ENCODE measurements at regions of chr19 and their contacts with region 1.

Region 1: GRCh38 chr19:10870955-10871603 is at the start of gene CARM1:
- DNase-seq: peak; percentile 97 to 100 (median 98)
- H3K4me3 ChIP-seq: peak within 1 kb of the TSS; percentile 52 to 90 (median 74)
- H3K27ac ChIP-seq: peak within 1 kb of the TSS in 57 of 59 donors; percentile 31 to 95 (median 86)
- H3K27me3 ChIP-seq: no peaks in the 10 kb centered on the region
- CTCF ChIP-seq: peak in 55 of 56 donors; percentile 17 to 80 (median 63)
- total RNA-seq, gene CARM1: 31.2 to 58.4 (median 45.9) TPM

Region 2: DNA sequence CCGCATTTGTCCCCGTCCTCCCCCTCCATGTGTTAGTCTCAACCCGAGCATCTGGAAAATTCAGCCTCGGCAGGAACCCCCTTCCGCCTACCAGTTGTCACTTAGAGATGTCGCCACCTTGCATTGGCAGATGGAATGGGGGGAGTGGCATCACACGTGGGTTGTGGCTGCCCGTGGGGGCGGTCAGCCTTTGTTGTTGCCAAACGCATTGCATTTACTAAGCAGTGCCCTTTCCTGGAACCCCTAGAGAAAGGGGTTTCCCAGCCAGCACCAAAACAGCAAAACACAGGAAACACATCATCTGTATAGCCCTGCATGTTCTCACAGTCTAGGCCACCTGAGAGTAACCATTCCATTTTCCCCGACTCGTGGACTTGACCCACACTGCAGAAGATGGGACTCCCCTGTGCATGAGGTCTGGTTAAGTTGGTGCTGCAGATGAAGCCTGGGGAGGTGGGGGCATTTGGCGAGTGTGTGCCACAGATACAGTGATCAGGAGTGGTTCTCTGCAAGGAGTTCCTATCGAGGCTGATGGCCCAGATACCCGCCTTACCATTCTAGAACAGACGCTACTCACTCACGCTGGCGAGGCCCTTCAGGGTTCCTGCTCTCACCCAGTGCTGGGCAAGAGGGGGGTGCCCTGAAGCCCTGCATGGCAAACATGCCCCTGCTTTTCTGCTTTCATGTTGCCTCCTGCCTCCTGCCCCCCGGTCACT is 73.4 kb before region 1 on chr19:
- intact Hi-C with region 1: no loop called
- DNase-seq: peak in 9 of 10 donors; percentile 38 to 75 (median 54)
- H3K4me3 ChIP-seq: no peak overlapping the region
- H3K27ac ChIP-seq: peak overlapping the region in 51 of 59 donors; percentile 5 to 81 (median 60)
- H3K27me3 ChIP-seq: no peaks in the 10 kb centered on the region
- CTCF ChIP-seq: no peak

Region 3: GRCh38 chr19:10835754-10836477 is 35.2 kb before region 1 on chr19 and contains the start of gene TMED1:
- intact Hi-C with region 1: loop called (anchors 2 to 5 kb)
- DNase-seq: peak; percentile 94 to 100 (median 99)
- H3K4me3 ChIP-seq: peak within 1 kb of the TSS; percentile 58 to 97 (median 83)
- H3K27ac ChIP-seq: peak within 1 kb of the TSS; percentile 88 to 100 (median 99)
- H3K27me3 ChIP-seq: no peaks in the 10 kb centered on the region
- CTCF ChIP-seq: peak in 53 of 56 donors; percentile 27 to 77 (median 49)
- total RNA-seq, gene TMED1: 7.7 to 25.1 (median 13.0) TPM

Region 4: DNA sequence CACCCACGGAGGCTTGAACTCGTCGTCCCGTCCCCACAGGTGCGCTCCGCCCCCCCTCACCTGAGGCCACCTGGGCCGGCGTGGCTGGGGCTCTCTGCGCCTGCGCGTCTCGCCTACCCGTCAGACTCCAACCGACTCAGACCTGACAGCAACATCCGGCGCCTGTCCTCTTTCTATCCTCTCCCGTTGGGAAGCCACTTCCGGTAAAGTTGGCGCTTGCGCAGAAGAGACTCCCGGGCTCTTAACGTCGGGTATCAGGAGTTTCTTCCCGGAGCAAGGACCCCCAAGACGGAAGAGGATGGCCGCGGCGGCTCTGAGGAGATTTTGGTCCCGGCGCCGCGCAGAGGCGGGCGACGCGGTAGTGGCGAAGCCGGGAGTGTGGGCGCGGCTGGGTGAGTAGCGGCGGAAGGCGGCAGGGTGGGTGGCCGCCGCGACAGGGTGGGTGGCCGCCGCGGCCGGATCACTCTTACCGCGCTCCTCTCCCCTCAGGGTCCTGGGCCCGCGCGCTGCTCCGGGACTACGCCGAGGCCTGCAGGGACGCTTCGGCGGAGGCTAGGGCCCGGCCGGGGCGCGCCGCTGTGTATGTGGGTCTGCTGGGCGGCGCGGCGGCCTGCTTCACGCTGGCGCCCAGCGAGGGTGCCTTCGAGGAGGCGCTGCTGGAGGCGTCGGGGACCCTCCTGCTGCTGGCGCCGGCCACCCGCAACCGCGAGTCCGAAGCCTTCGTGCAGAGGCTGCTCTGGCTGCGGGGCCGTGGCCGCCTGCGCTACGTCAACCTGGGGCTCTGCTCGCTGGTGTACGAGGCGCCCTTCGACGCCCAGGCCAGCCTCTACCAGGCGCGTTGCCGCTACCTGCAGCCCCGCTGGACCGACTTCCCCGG is 57.7 kb after region 1 on chr19 and contains the starts of genes TIMM29 and YIPF2:
- intact Hi-C with region 1: loop called (anchors 2 kb)
- DNase-seq: peak; percentile 95 to 98 (median 98)
- H3K4me3 ChIP-seq: peak within 1 kb of the TSS; percentile 77 to 100 (median 96)
- H3K27ac ChIP-seq: peak within 1 kb of the TSS; percentile 34 to 94 (median 88)
- H3K27me3 ChIP-seq: no peaks in the 10 kb centered on the region
- CTCF ChIP-seq: peak in 39 of 56 donors; percentile 5 to 60 (median 35)
- total RNA-seq, gene TIMM29: 15.6 to 33.0 (median 23.3) TPM
- total RNA-seq, gene YIPF2: 22.1 to 45.7 (median 32.1) TPM

Measured in dorsolateral prefrontal cortex (tissue), 120 donors.